IMR-90 (cell line): ENCODE measurements at regions of chr10 and their contacts with region 1.

Region 1: DNA sequence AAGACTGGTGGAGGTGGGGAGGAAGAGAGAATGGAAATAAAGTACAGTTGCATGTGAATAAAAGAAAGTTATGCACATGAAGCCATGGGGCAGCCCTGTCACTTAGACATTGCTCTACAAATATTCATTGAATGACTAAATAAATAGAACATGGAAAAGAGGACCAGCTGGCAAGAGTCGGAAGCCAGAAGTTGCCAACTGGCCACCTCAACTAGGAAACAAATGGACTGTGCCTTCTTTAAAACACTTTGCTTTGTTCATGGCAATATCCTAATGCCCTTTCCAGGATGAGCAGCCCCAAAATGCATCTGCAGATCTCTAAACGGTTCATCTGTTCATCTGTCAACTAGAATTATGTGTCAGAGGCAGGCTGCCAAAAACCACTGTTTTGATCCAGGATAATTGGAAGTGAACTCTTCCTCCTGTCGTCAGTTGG is 157.3 kb downstream of the NOC3L start:
- DNase-seq: peak; percentile 42
- ATAC-seq: peak; percentile 33; the same call in 1 of the 2 replicates
- H3K4me3 ChIP-seq: no peak overlapping the region
- H3K27ac ChIP-seq: no peak overlapping the region
- H3K4me1 ChIP-seq: peaks cover 4% of the 10 kb centered on the region; the same call in 1 of the 2 replicates
- H3K27me3 ChIP-seq: peaks cover 2% of the 10 kb centered on the region
- CTCF ChIP-seq: no peak
- POLR2A ChIP-seq: no peak
- RAD21 ChIP-seq: no peak

Region 2: GRCh38 chr10:93993782-93994437 is 211.5 kb before region 1 on chr10 and contains the start of gene PLCE1:
- CTCF ChIA-PET with region 1: no interaction called
- POLR2A ChIA-PET with region 1: no interaction called
- dilution Hi-C with region 1: no loop called
- in situ Hi-C with region 1: no loop called
- intact Hi-C with region 1: loop called (anchors 10 kb)
- DNase-seq: peak; percentile 19
- ATAC-seq: peak; percentile 88
- H3K4me3 ChIP-seq: peak within 1 kb of the TSS; percentile 56
- H3K27ac ChIP-seq: no peak within 1 kb of the TSS; the same call in 1 of the 2 replicates
- H3K4me1 ChIP-seq: peaks cover 7% of the 10 kb centered on the region
- H3K27me3 ChIP-seq: peaks cover 6% of the 10 kb centered on the region; the same call in 1 of the 2 replicates
- CTCF ChIP-seq: 0 out of 2 replicates have a peak, but pooled peaks have one; percentile 14
- POLR2A ChIP-seq: no peak
- RAD21 ChIP-seq: no peak
- total RNA-seq, gene PLCE1: 3.9 and 4.5 TPM in 2 replicates

Region 3: GRCh38 chr10:94088926-94089381 is 116.5 kb before region 1 on chr10:
- CTCF ChIA-PET with region 1: no interaction called
- POLR2A ChIA-PET with region 1: no interaction called
- dilution Hi-C with region 1: no loop called
- in situ Hi-C with region 1: no loop called
- intact Hi-C with region 1: loop called (anchors 10 kb)
- DNase-seq: peak; percentile 70
- ATAC-seq: peak; percentile 80
- H3K4me3 ChIP-seq: no peak overlapping the region
- H3K27ac ChIP-seq: no peak overlapping the region
- H3K4me1 ChIP-seq: peaks cover 8% of the 10 kb centered on the region
- H3K27me3 ChIP-seq: no peaks in the 10 kb centered on the region
- CTCF ChIP-seq: no peak
- POLR2A ChIP-seq: no peak
- RAD21 ChIP-seq: no peak

Region 4: GRCh38 chr10:94193466-94193924 is 11.9 kb before region 1 on chr10:
- CTCF ChIA-PET with region 1: interaction called, 4 read pairs
- POLR2A ChIA-PET with region 1: no interaction called
- dilution Hi-C with region 1: no loop called
- in situ Hi-C with region 1: no loop called
- intact Hi-C with region 1: loop called (anchors 2 kb)
- DNase-seq: peak; percentile 90
- ATAC-seq: peak; percentile 85
- H3K4me3 ChIP-seq: no peak overlapping the region
- H3K27ac ChIP-seq: 0 out of 2 replicates have a peak overlapping the region, but pooled peaks have one; percentile 36
- H3K4me1 ChIP-seq: peaks cover 8% of the 10 kb centered on the region
- H3K27me3 ChIP-seq: no peaks in the 10 kb centered on the region
- CTCF ChIP-seq: no peak
- POLR2A ChIP-seq: no peak
- RAD21 ChIP-seq: no peak